ENCODE measurements at regions of chr6 and their contacts with region 1.

Region 1: DNA sequence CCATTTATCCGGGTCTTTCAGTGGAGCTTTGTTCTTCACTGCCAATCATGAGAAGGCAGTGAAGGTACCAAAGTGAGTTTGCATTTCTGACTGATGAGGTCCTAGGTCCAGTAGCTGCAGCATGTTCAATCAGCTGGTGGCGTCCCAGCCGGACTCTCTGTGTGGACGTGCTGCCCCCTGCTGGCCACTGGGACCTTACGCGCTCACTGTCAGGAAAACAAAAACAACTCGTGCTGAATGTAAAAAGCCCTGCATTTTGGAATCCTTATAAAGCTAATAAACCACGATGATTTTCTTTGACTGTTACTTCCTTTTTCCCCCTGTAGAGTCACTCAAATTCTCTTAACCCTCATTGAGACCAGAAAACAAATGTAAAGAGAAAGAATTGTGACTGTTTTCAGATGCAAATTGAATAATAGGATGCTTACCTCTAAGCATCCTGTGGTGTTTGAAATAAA is 4.9 kb upstream of the CD24 start:
- DNase-seq: peak; percentile 93
- H3K4me3 Mint-ChIP-seq: no peak overlapping the region
- H3K27ac Mint-ChIP-seq: no peak overlapping the region
- H3K4me1 Mint-ChIP-seq: peaks cover 20% of the 10 kb centered on the region
- H3K27me3 Mint-ChIP-seq: no peaks in the 10 kb centered on the region
- CTCF ChIP-seq: peak; percentile 79

Region 2: DNA sequence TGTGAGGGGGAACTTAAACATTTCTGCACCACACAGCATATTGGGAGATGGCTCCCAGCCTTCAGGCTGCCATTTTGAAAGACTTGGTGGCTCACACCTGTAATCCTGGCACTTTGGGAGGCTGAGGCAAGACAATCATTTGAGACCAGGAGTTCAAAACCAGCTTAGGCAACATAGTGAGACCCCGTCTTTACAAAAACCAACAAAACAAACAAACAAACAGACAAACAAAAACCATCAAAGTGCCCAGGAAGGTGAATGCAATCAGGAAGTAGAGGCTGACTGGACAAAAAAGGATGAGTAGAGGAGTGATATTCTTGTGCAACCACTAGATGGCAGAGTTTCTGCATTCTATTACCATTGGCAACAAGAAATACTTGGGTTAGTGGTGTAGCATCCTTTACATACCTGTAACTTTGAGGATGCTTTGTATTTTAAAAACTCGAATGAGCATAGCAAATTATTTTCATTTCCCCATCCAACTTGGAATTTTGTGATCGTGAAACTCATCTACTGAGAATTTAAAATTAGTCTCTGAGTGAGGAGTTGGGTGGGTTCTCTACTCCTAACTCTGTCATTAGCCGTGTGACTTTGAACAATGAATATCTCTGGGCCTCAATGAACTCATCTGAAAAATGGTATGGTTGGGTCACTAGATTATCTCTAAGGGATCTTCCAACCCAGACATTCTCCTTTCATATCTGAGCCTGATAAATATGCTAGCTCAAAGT is 534.5 kb before region 1 on chr6:
- CTCF ChIA-PET with region 1: no interaction called
- intact Hi-C with region 1: loop called (anchors 2 kb)
- DNase-seq: peak; percentile 51
- H3K4me3 Mint-ChIP-seq: no peak overlapping the region
- H3K27ac Mint-ChIP-seq: peak overlapping the region; percentile 50
- H3K4me1 Mint-ChIP-seq: peaks cover 26% of the 10 kb centered on the region
- H3K27me3 Mint-ChIP-seq: no peaks in the 10 kb centered on the region
- CTCF ChIP-seq: peak; percentile 58

Region 3: DNA sequence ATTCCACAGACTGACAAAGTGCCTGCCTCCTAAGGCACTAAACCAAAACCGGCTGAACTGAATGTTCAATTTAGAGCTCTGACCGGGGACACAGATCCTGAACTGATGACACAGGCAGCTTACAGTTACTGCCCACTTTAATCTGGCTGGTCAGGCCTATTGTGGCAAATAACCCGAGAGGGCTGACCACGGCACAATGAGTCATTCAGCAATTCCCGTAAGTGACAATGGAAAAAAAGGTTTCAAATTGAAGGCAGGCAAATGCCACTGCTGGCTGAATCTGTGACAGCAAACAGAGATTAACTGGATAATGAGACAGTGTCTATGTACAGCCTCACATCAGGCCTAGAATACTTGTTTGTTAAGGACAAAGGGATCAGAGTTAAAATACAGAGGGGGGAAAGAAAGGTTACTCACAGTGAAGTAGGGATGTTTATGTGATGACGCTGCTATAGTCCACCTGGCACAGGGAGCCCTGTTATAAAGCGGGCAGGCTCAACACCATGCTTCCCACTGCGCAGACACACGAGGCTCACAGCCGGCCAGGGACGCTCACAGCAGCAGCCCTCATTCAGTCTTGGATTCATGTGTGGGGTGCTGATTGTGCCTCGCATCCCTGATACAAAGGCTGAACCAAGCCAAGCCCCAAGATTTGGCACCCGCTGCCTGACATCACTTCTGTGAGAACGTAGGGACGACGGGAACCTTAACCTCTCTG is 404.6 kb before region 1 on chr6:
- CTCF ChIA-PET with region 1: interaction called, 3 read pairs
- intact Hi-C with region 1: loop called (anchors 5 kb)
- DNase-seq: peak; percentile 38
- H3K4me3 Mint-ChIP-seq: no peak overlapping the region
- H3K27ac Mint-ChIP-seq: no peak overlapping the region
- H3K4me1 Mint-ChIP-seq: peaks cover 10% of the 10 kb centered on the region
- H3K27me3 Mint-ChIP-seq: no peaks in the 10 kb centered on the region
- CTCF ChIP-seq: no peak

Region 4: GRCh38 chr6:106608062-106608668 is 371.3 kb before region 1 on chr6:
- CTCF ChIA-PET with region 1: interaction called, 7 read pairs
- intact Hi-C with region 1: loop called (anchors 1 kb)
- DNase-seq: peak; percentile 58
- H3K4me3 Mint-ChIP-seq: no peak overlapping the region
- H3K27ac Mint-ChIP-seq: no peak overlapping the region
- H3K4me1 Mint-ChIP-seq: peaks cover 24% of the 10 kb centered on the region
- H3K27me3 Mint-ChIP-seq: no peaks in the 10 kb centered on the region
- CTCF ChIP-seq: peak; percentile 49

Region 5: DNA sequence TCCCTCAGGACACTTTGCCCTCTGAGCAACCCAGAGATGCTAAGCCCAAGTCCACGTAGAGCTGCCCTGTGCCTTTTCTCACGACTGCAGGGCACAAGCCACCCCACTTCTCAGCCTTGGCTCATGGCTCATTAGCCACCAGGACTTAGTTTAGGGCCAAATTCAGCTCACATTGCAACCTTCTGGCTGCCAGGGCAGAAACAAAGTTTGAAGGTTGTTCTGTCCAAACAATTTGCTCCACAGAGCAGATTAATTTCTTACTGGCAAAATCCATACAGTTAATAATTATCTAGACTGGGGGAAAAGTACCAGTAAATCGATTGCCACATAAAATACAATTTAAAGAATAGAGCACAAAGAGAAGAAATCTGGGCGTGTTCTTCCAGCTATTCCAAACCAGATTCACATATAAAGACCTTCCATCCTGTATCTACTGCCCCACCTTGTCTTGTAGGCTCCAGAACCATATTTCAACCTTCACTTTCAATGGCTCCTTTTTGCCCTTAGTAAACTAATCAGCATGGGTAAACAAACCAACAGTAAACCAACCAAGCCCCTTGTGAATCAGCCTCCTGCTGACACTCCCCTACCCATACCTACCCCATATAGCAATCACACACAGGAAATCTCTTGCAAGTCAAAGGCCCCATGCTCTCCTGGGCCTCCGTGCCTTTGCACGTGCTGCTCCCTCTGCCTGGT is 248.2 kb before region 1 on chr6:
- CTCF ChIA-PET with region 1: no interaction called
- intact Hi-C with region 1: loop called (anchors 5 kb)
- DNase-seq: peak; percentile 66
- H3K4me3 Mint-ChIP-seq: peak overlapping the region; percentile 6
- H3K27ac Mint-ChIP-seq: peak overlapping the region; percentile 79
- H3K4me1 Mint-ChIP-seq: peaks cover 72% of the 10 kb centered on the region
- H3K27me3 Mint-ChIP-seq: no peaks in the 10 kb centered on the region
- CTCF ChIP-seq: no peak

Region 6: GRCh38 chr6:106746660-106747059 is 232.8 kb before region 1 on chr6:
- CTCF ChIA-PET with region 1: interaction called, 5 read pairs
- intact Hi-C with region 1: loop called (anchors 5 kb)
- DNase-seq: peak; percentile 59
- H3K4me3 Mint-ChIP-seq: peak overlapping the region; percentile 27
- H3K27ac Mint-ChIP-seq: peak overlapping the region; percentile 89
- H3K4me1 Mint-ChIP-seq: peaks cover 88% of the 10 kb centered on the region
- H3K27me3 Mint-ChIP-seq: no peaks in the 10 kb centered on the region
- CTCF ChIP-seq: no peak

Region 7: GRCh38 chr6:106883808-106884262 is 95.6 kb before region 1 on chr6:
- CTCF ChIA-PET with region 1: interaction called, 3 read pairs
- intact Hi-C with region 1: loop called (anchors 2 kb)
- DNase-seq: no peak
- H3K4me3 Mint-ChIP-seq: no peak overlapping the region
- H3K27ac Mint-ChIP-seq: no peak overlapping the region
- H3K4me1 Mint-ChIP-seq: peaks cover 56% of the 10 kb centered on the region
- H3K27me3 Mint-ChIP-seq: no peaks in the 10 kb centered on the region
- CTCF ChIP-seq: no peak

Region 8: GRCh38 chr6:107292715-107293271 is 313.3 kb after region 1 on chr6:
- CTCF ChIA-PET with region 1: no interaction called
- intact Hi-C with region 1: no loop called
- DNase-seq: no peak
- H3K4me3 Mint-ChIP-seq: no peak overlapping the region
- H3K27ac Mint-ChIP-seq: no peak overlapping the region
- H3K4me1 Mint-ChIP-seq: peaks cover 11% of the 10 kb centered on the region
- H3K27me3 Mint-ChIP-seq: no peaks in the 10 kb centered on the region
- CTCF ChIP-seq: no peak

Region 9: DNA sequence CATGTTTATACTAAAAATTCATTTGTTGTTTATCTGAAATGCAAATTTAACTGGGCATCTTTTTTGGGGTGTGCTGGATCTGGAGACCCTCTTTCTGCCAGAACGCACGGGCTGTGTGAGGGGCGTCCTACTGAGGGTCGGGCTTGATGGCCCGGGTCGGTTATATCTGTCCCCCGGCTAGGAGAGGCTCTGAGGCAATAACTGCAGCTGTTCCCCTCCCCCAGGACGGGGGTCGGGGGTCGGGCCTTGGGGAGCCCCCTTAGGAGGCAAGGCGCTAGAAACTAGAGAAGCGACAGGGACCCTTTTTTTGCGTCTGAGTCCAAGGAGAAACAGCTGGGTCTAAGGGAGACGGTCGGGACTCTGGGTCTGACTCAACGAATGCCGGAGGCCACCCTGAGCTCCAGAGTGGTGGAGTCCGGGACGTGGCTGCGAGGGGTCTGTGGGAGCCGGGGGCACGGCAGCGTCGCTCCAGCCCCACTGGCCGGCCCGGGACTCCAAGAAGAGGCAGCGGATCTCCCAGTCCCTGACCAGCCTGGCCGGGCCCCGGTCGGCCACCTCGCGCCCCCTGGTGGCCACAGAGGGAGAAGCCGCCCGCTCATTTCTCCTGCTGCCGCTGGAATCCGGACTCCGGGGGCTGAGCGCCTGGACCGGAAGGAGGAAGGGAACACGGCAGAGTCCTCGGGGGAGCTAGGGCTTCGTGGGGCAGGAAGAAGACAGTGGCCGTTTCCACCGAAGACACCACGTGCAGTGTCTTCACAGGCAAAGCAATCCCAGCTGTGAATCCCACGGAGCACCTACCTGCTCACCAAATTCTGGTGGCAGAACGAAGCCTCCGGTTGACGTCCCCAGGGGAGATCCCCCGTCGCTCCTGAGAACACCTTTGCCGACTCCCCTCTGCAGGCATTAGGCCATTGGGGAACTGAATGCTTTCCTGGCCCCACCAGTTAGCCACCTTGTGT is 868.7 kb after region 1 on chr6:
- CTCF ChIA-PET with region 1: no interaction called
- intact Hi-C with region 1: no loop called
- DNase-seq: peak; percentile 94
- H3K4me3 Mint-ChIP-seq: peak overlapping the region; percentile 70
- H3K27ac Mint-ChIP-seq: no peak overlapping the region
- H3K4me1 Mint-ChIP-seq: peaks cover 8% of the 10 kb centered on the region
- H3K27me3 Mint-ChIP-seq: no peaks in the 10 kb centered on the region
- CTCF ChIP-seq: peak; percentile 91

Measured in Calu3 (cell line).